ENCODE measurements at regions of chr16 and their contacts with region 1.

Region 1: DNA sequence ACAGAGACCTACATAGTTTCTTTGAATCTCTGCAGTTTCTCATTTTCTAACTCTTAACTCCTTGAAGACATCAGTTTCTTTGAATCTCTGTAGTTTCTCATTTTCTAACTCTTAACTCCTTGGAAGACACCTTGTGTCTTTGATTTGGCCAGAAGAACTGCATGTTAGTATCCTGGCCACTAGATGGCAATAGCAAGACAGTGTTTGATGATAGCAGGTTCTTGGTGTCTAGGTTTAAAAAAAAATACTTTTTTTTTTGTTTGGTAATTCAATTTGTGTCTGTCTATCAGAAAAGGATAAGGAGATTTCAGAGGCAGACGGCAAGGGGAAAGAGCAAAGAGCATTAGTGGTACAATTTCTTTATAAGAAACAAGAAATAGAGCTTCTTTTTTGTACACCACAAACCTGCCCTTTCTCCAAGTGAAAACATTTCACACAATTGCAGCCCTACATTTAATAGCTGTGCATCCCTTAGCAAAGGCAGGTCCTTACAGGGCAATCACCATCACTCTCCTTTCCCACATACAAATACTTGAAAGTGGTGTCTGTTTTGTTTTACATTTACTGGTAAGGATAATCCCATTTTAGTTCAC is 1324.9 kb upstream of the CDH8 start:
- DNase-seq: peak in 2 of 4 donors; percentile 13 to 20
- ATAC-seq: no peak
- H3K4me3 ChIP-seq: no peak overlapping the region
- H3K27ac ChIP-seq: no peak overlapping the region
- H3K4me1 ChIP-seq: no peaks in the 10 kb centered on the region
- H3K27me3 ChIP-seq: no peaks in the 10 kb centered on the region
- CTCF ChIP-seq: peak; percentile 47 to 79 (median 63)
- POLR2A ChIP-seq: no peak

Region 2: GRCh38 chr16:63403793-63404192 is 42.7 kb after region 1 on chr16:
- intact Hi-C with region 1: no loop called
- DNase-seq: no peak
- ATAC-seq: no peak
- H3K4me3 ChIP-seq: no peak overlapping the region
- H3K27ac ChIP-seq: no peak overlapping the region
- H3K4me1 ChIP-seq: no peaks in the 10 kb centered on the region
- H3K27me3 ChIP-seq: no peaks in the 10 kb centered on the region
- CTCF ChIP-seq: no peak
- POLR2A ChIP-seq: no peak

Region 3: DNA sequence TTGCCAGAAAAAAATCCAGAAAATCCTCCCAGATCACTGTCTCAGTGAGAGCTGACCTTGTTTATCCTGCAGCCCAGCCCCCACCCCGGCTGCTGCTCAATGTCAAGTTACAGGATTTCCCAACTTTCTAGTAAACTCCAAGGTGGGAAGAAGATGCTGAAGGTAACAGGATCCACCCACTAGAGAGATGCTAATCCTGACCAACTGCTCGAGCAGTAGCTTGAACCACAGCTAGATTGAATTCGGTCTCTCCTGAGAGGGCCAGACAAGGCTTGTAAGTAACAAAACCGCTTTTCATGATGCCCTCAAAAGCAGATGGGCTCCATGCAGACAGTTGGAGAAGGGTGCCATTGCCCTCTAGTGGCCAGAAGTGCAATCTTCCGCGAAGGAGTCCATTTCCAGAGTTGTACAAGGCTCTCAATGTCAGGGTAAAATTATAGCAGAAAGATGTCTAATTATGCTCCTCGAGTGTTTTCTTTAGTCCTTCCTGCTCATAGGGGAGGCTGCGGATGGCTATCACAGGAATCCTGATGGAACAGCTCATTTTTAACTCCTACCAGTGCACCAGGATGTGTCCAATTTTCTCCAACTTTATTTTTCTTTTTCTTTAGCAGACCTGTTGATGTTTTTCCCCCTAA is 1756.8 kb after region 1 on chr16:
- intact Hi-C with region 1: loop called (anchors 10 kb)
- DNase-seq: peak; percentile 57 to 67 (median 58)
- ATAC-seq: peak; percentile 72
- H3K4me3 ChIP-seq: no peak overlapping the region
- H3K27ac ChIP-seq: no peak overlapping the region
- H3K4me1 ChIP-seq: peaks cover 21% of the 10 kb centered on the region
- H3K27me3 ChIP-seq: peaks cover 0 to 6% of the 10 kb centered on the region in 2 donors
- CTCF ChIP-seq: peak; percentile 73 to 86 (median 80)
- POLR2A ChIP-seq: no peak

Measured in body of pancreas (tissue), 4 donors.